Left cardiac atrium (tissue), 4 donors: ENCODE measurements at regions of chr16 and their contacts with region 1.

Region 1: DNA sequence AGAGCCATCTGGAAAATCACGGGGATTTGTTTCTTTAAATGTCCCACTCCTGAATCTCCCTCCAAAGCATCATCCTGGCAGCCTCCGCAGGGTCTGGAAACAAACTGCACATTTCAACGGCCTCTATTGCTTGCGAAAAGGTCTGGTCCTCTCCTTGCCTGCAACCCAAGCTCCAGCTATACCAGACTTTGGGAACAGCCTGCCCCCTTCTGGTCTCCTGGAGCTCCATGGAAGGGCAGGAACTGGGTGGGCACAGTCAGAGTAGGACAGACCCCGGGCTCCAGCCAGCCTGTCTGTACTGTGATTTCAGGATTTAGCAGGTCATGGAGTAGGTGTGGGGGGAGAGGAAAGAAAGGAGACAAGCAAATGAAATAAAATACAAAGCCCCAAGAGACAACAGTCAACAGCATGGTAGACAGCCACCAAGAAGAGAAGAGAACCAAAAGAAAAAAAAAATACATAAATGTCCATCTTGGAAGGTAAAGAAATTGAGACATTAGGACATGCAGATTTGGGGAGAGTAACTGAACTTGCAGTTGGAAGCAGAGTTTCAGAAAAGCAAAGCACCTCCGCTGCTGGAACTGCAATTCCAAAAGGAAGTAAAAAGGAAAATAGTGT is 2.7 kb downstream of the XYLT1 start:
- DNase-seq: peak; percentile 72
- ATAC-seq: peak; percentile 61 to 62

Region 2: DNA sequence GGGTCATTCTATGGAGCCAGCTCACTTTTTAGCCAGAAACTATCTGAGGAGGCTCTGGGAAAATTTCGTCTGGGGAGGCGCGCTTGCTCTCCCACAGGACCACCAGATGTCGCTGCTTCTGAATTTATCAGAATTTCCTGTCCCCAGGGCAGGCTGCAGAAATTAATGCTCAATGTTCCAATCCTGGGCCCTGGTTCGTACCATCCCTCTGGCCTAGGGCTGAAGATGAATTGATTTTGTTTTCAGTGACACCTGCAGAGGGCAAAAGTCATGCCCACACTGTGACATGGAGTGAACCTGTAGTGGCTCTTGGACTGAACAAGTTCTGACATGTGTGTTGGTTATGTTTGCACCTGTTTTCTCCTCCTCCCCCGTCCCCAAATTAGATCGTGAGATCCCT is 606.5 kb before region 1 on chr16:
- intact Hi-C with region 1: loop called in 1 of 2 experiments (anchors 5 kb)
- DNase-seq: peak; percentile 32
- ATAC-seq: peak in 1 of 2 donors; percentile 36

Region 3: DNA sequence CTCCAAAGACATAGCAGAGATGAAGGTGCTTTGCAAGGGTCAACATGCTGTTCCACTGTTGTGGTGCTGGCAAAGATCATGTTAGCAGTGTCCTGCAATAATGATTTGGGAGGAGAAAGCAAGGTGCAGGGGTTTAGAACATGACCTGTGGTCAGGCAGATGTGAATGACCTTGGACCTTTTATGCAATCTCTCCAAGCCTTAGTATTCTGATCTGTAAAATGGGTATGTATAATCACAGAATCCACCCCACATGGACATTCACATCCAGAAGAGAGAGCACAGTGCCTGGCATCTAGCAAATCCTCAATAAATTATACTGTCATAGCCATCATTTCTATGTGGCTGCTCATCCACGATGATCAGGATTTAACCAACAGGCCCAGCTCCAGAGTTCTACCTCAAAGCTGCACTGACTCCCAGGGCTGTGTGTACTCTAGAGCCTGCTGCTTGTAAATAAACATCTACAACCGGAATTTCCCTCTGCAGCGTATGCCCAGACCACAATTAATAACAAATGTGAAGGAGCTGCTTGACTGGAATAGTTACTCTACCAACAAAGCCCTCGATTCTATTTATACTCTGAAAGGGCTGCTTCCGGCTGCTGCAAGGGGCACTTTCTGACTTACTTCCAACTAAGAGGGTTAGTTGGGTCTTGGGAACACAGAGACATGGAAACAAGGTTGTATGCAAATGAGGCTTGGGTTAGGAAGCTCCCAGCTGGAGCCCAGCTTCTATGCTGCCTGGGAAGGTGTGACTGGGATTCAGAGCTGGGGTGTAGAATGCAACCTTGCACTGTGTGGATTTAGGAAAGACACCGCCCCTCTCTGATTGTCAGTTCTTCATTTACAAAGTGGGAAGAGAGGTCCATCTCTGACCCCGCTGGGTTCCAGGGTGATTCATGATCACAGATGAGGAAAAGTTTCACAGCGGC is 262.5 kb before region 1 on chr16:
- intact Hi-C with region 1: loop called in 1 of 2 experiments (anchors 5 kb)
- DNase-seq: no peak
- ATAC-seq: no peak

Region 4: DNA sequence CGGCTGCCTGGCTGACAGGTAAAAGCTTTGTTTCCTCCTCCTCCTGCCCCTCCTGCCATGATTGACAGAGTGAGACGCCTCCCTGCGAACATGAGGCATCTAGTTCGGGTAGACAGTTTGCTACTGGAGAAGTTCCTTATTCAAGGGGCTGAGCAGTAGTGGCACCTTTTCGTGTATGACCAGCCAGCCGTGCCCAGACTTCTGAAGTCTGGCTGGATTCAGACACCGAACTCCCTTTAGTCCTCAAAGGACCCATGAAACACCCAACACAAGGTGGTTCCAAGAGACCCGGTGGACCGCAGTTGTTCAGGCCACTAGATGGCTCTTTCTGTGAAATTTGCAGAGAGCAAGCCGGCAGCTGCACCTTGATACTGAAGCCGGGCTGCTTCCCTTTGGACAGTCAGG is 190.1 kb before region 1 on chr16:
- intact Hi-C with region 1: loop called (anchors 10 kb)
- DNase-seq: peak; percentile 35
- ATAC-seq: peak; percentile 61 to 67

Region 5: GRCh38 chr16:17343028-17343427 is 125.0 kb before region 1 on chr16:
- intact Hi-C with region 1: loop called in 1 of 2 experiments (anchors 10 kb)
- DNase-seq: no peak
- ATAC-seq: peak in 1 of 2 donors; percentile 8